ENCODE measurements at regions of chr3 and their contacts with region 1.

Region 1: GRCh38 chr3:17645072-17645698 is 97.2 kb downstream of the TBC1D5 start:
- DNase-seq: peak; percentile 67
- ATAC-seq: peak; percentile 75
- H3K4me3 ChIP-seq: no peak overlapping the region
- H3K27ac ChIP-seq: no peak overlapping the region
- H3K4me1 ChIP-seq: no peaks in the 10 kb centered on the region
- H3K27me3 ChIP-seq: no peaks in the 10 kb centered on the region
- CTCF ChIP-seq: peak; percentile 69
- EP300 ChIP-seq: no peak
- POLR2A ChIP-seq: no peak
- RAD21 ChIP-seq: no peak; the same call in 1 of the 2 replicates

Region 2: GRCh38 chr3:17678116-17678741 is 33.0 kb after region 1 on chr3:
- CTCF ChIA-PET with region 1: no interaction called
- POLR2A ChIA-PET with region 1: no interaction called
- in situ Hi-C with region 1: no loop called
- intact Hi-C with region 1: no loop called
- DNase-seq: no peak
- ATAC-seq: no peak
- H3K4me3 ChIP-seq: no peak overlapping the region
- H3K27ac ChIP-seq: no peak overlapping the region
- H3K4me1 ChIP-seq: no peaks in the 10 kb centered on the region
- H3K27me3 ChIP-seq: no peaks in the 10 kb centered on the region
- CTCF ChIP-seq: no peak
- EP300 ChIP-seq: no peak
- POLR2A ChIP-seq: no peak
- RAD21 ChIP-seq: no peak

Region 3: GRCh38 chr3:17742108-17742879 is 97.1 kb after region 1 on chr3 and contains the start of gene TBC1D5:
- CTCF ChIA-PET with region 1: no interaction called
- POLR2A ChIA-PET with region 1: interaction called, 4 read pairs
- in situ Hi-C with region 1: no loop called
- intact Hi-C with region 1: loop called (anchors 2 kb)
- DNase-seq: peak; percentile 94
- ATAC-seq: peak; percentile 88
- H3K4me3 ChIP-seq: peak within 1 kb of the TSS; percentile 79 to 88 (median 79)
- H3K27ac ChIP-seq: peak within 1 kb of the TSS; percentile 98
- H3K4me1 ChIP-seq: peaks cover 60% of the 10 kb centered on the region
- H3K27me3 ChIP-seq: no peaks in the 10 kb centered on the region; a peak in 1 of 5 replicates
- CTCF ChIP-seq: no peak; the same call in 1 of the 2 replicates
- EP300 ChIP-seq: 0 out of 4 replicates have a peak, but pooled peaks of 1 of the 2 experiments have one; percentile 11
- POLR2A ChIP-seq: peak; percentile 78
- RAD21 ChIP-seq: peak; percentile 27; the same call in 1 of the 2 replicates
- total RNA-seq, gene TBC1D5: 33.3 and 50.5 TPM in 2 replicates

Region 4: DNA sequence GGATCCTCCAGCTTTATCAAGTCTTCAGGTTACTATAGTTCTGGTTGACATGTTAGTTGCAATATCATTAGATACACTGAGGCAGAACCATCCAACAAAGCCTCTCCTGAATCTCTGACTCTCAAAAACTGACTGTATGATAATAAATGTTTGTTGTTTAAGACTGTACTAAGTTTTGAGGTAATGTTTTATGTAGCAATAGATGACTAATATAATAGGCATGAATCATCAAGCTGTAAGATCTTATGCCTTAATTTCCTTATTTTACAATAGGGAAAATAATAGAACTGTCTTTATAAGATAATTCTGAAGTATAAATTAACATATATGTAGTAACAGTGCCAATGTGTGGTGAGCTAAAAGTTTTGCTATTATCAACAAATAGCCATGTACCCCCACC is 186.2 kb after region 1 on chr3:
- CTCF ChIA-PET with region 1: no interaction called
- POLR2A ChIA-PET with region 1: no interaction called
- in situ Hi-C with region 1: loop called (anchors 10 kb)
- intact Hi-C with region 1: no loop called
- DNase-seq: no peak
- ATAC-seq: no peak
- H3K4me3 ChIP-seq: no peak overlapping the region
- H3K27ac ChIP-seq: no peak overlapping the region
- H3K4me1 ChIP-seq: no peaks in the 10 kb centered on the region
- H3K27me3 ChIP-seq: 0 out of 5 replicates have a peak, but pooled peaks cover 0 to 2% of the 10 kb centered on the region in 2 experiments
- CTCF ChIP-seq: no peak
- EP300 ChIP-seq: no peak
- POLR2A ChIP-seq: no peak
- RAD21 ChIP-seq: no peak

Region 5: DNA sequence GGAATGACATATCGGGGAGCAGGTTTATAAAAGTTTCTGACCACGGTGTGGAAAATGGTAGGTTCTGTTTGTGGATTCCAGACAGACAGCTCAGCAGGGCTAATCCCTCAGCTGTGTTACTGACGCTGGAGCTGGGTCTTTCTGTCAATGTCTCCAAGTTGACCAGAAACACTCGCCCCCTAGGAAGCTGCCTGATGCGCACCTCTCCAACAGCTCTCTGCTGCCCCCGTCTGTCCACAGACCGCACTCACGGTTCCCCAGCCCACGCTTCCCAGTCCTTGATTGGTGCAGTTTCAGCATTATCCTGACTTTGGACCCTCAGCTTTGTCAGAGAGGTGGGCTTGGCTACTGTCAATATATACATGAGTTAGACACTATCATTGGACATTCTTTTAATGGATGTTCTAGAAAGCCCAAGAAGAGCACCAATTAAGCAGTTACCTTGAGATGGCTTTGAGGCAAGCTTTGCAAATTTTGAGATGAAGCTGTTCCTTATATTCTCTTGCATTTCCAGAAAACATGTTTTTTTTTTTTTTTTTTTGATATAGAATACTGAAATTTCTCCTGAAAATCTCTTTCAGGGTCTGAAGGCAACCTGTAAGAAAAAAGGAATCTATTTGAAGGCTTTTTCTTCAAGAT is 196.1 kb after region 1 on chr3:
- CTCF ChIA-PET with region 1: interaction called, 27 read pairs
- POLR2A ChIA-PET with region 1: no interaction called
- in situ Hi-C with region 1: loop called (anchors 10 kb)
- intact Hi-C with region 1: loop called (anchors 1 kb)
- DNase-seq: peak; percentile 57
- ATAC-seq: peak; percentile 99
- H3K4me3 ChIP-seq: no peak overlapping the region
- H3K27ac ChIP-seq: no peak overlapping the region
- H3K4me1 ChIP-seq: no peaks in the 10 kb centered on the region
- H3K27me3 ChIP-seq: no peaks in the 10 kb centered on the region
- CTCF ChIP-seq: peak; percentile 96
- EP300 ChIP-seq: no peak
- POLR2A ChIP-seq: no peak
- RAD21 ChIP-seq: peak; percentile 90